ENCODE measurements at regions of chr16 and their contacts with region 1.

Region 1: DNA sequence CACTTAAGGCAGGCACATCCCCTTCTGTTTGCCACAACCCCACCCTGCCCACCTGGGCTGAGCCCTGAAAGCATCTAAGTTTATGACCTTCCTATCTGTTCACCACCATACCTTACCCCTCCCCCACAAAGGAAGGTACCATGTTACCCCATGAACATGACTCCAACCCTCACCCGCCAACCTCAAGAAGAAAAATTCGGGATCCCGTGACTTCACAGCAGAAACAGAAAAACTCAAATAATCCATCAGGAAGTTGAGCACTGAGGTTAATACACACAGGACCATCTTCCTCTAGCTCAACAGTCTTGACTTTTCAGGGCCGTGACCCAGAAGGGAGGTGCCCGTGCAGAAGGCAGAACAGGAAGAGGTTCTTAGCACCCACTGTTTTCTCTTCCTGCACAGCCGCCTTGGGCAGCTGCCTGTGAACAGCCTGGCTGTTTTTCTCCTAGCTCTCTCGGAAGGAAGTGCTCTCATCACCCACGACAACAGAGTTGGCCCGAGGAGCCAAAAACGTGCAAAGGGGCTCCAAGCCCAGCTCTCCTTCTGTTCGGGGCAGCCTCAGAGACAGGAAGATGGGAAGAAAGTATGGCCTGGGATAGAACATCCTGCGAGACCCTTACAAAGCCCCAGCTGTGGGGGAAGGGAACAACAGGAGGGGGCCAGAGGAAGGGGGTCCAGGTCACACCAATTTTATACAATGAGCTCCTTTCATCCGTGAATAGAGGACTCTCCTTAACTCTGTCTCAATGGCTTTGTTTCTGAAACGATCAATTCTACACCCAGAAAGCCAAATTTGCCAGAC is 101.1 kb downstream of the XYLT1 start:
- DNase-seq: peak; percentile 79
- ATAC-seq: peak; percentile 83
- H3K4me3 Mint-ChIP-seq: peak overlapping the region; percentile 91
- H3K27ac Mint-ChIP-seq: peak overlapping the region; percentile 99
- H3K4me1 Mint-ChIP-seq: peaks cover 85% of the 10 kb centered on the region
- H3K27me3 Mint-ChIP-seq: no peaks in the 10 kb centered on the region
- CTCF ChIP-seq: no peak

Region 2: GRCh38 chr16:17313085-17313611 is 56.5 kb before region 1 on chr16:
- CTCF ChIA-PET with region 1: no interaction called
- POLR2A ChIA-PET with region 1: no interaction called
- intact Hi-C with region 1: loop called (anchors 10 kb)
- DNase-seq: no peak
- ATAC-seq: no peak
- H3K4me3 Mint-ChIP-seq: no peak overlapping the region
- H3K27ac Mint-ChIP-seq: no peak overlapping the region
- H3K4me1 Mint-ChIP-seq: peaks cover 26% of the 10 kb centered on the region
- H3K27me3 Mint-ChIP-seq: no peaks in the 10 kb centered on the region
- CTCF ChIP-seq: no peak

Region 3: DNA sequence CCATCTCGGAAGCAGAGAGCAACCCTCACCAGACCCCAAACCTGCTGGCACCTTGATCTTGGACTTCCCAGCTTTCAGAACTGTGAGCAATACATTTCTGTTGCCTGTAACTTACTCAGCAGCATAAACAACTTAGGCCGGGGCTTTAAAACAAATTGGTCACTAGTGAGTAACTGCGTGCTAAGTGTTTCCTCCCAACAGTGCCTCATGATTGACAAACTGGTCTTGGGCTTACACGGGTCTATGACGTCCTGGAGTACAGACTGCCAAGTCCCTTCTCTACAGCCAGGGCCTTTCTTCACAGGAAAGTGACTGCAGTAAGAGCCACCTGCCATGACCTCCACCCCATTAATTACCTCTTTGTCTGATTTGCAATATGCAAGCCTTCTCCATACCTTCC is 35.5 kb before region 1 on chr16:
- CTCF ChIA-PET with region 1: no interaction called
- POLR2A ChIA-PET with region 1: no interaction called
- intact Hi-C with region 1: no loop called
- DNase-seq: no peak
- ATAC-seq: no peak
- H3K4me3 Mint-ChIP-seq: no peak overlapping the region
- H3K27ac Mint-ChIP-seq: no peak overlapping the region
- H3K4me1 Mint-ChIP-seq: peaks cover 7% of the 10 kb centered on the region
- H3K27me3 Mint-ChIP-seq: no peaks in the 10 kb centered on the region
- CTCF ChIP-seq: no peak

Region 4: DNA sequence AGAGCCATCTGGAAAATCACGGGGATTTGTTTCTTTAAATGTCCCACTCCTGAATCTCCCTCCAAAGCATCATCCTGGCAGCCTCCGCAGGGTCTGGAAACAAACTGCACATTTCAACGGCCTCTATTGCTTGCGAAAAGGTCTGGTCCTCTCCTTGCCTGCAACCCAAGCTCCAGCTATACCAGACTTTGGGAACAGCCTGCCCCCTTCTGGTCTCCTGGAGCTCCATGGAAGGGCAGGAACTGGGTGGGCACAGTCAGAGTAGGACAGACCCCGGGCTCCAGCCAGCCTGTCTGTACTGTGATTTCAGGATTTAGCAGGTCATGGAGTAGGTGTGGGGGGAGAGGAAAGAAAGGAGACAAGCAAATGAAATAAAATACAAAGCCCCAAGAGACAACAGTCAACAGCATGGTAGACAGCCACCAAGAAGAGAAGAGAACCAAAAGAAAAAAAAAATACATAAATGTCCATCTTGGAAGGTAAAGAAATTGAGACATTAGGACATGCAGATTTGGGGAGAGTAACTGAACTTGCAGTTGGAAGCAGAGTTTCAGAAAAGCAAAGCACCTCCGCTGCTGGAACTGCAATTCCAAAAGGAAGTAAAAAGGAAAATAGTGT is 98.4 kb after region 1 on chr16:
- CTCF ChIA-PET with region 1: interaction called, 10 read pairs
- POLR2A ChIA-PET with region 1: no interaction called
- intact Hi-C with region 1: loop called (anchors 10 kb)
- DNase-seq: peak; percentile 68
- ATAC-seq: no peak
- H3K4me3 Mint-ChIP-seq: peak overlapping the region; percentile 90
- H3K27ac Mint-ChIP-seq: no peak overlapping the region
- H3K4me1 Mint-ChIP-seq: peaks cover 39% of the 10 kb centered on the region
- H3K27me3 Mint-ChIP-seq: peaks cover 2% of the 10 kb centered on the region
- CTCF ChIP-seq: peak; percentile 49

Measured in activated CD8-positive, alpha-beta T cell treated with anti-CD3 and anti-CD28 coated beads for 36 hours (primary cell).